AG04450 (cell line): ENCODE measurements at regions of chr7 and their contacts with region 1.

Region 1: DNA sequence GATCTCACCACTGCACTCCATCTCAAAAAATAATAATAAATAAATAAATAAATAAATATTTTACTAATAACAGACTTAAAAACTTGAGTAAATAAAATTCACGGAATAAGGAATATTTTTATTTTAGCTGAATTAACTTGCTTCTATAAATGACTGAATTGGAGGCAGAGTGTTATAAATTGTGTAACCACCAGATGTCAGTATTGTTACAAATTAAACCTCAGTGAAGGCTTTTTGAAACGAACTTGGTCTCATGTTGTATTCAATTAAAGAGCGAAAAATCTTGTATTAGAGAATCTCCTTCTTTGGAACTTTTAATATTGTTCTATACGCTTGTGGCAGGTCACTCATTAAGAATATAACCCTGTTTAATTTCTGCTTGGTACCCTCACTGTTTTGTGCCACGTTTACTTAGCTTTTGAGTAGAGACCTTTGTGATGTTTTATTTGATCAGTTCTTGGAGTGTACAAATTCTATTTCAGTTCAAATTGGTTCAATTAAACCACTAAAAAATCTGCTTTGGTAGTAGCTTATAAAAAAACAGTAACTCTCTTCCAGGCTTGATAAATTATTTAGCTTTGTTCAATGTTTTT is 45.6 kb upstream of the SCIN start:
- DNase-seq: peak; percentile 37
- H3K4me3 ChIP-seq: no peak overlapping the region
- H3K27ac ChIP-seq: no peak overlapping the region
- H3K27me3 ChIP-seq: no peaks in the 10 kb centered on the region
- CTCF ChIP-seq: peak; percentile 57

Region 2: GRCh38 chr7:12257582-12257981 is 267.3 kb before region 1 on chr7:
- CTCF ChIA-PET with region 1: no interaction called
- POLR2A ChIA-PET with region 1: no interaction called
- DNase-seq: no peak
- H3K4me3 ChIP-seq: no peak overlapping the region
- H3K27ac ChIP-seq: no peak overlapping the region
- H3K27me3 ChIP-seq: no peaks in the 10 kb centered on the region
- CTCF ChIP-seq: no peak

Region 3: DNA sequence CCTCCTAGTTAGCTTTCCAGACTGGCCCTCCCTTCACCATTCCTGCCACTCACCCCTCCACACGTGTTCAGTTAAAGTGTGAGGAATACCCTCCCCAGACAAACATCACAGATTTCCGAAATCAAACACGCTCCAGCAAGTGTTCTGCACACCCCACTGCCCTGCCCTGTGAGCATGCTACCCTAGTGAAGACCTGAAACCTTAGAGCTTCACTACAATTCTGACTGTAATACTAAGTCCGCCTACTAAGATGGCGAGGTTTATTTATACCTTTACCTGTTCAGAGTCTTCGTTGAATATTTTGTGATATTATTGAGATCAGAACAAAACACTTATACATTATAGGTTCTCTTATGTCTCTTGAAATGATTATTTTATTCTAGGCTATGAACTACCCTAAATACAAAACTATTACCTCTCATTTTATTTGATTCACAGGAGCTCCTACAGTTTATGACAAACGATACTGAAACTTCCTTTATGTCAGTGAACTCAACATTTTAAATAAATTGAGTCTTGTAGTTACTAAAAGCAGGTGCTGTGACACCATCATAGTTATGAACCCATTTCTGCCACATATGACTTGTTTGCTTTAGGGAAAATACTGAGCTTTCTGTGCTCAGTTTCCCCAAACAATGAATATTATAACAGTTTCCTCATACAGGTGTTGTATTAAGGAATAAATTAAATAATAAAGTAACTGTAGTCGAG is 54.2 kb after region 1 on chr7:
- CTCF ChIA-PET with region 1: interaction called, 10 read pairs
- POLR2A ChIA-PET with region 1: no interaction called
- DNase-seq: no peak
- H3K4me3 ChIP-seq: no peak overlapping the region
- H3K27ac ChIP-seq: no peak overlapping the region
- H3K27me3 ChIP-seq: no peaks in the 10 kb centered on the region
- CTCF ChIP-seq: no peak

Region 4: DNA sequence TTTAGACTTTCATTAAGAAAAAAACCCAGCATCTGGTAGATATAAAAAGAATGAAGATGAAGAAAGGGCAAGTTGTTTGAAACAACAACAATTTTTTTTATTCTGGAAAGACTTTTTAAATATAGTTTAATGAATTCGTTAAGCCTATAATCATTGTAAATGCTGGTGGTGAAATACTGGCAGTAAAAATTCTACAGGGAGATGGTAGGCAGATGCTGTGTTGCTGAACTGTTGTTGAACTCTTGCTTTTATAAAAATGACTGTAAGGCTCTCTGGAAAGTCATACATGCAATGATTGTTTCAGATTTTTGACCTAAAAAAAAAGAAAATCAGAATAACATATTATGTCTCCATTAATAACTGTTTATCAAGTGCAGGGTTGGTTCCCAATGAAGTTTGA is 84.7 kb after region 1 on chr7:
- CTCF ChIA-PET with region 1: interaction called, 19 read pairs
- POLR2A ChIA-PET with region 1: no interaction called
- DNase-seq: no peak
- H3K4me3 ChIP-seq: no peak overlapping the region
- H3K27ac ChIP-seq: no peak overlapping the region
- H3K27me3 ChIP-seq: no peaks in the 10 kb centered on the region
- CTCF ChIP-seq: no peak

Region 5: GRCh38 chr7:12623897-12624498 is 99.1 kb after region 1 on chr7:
- CTCF ChIA-PET with region 1: interaction called, 161 read pairs
- POLR2A ChIA-PET with region 1: no interaction called
- DNase-seq: no peak
- H3K4me3 ChIP-seq: no peak overlapping the region
- H3K27ac ChIP-seq: no peak overlapping the region
- H3K27me3 ChIP-seq: no peaks in the 10 kb centered on the region
- CTCF ChIP-seq: peak; percentile 88

Region 6: GRCh38 chr7:12630513-12630819 is 105.6 kb after region 1 on chr7:
- CTCF ChIA-PET with region 1: interaction called, 18 read pairs
- POLR2A ChIA-PET with region 1: no interaction called
- DNase-seq: no peak
- H3K4me3 ChIP-seq: no peak overlapping the region
- H3K27ac ChIP-seq: no peak overlapping the region
- H3K27me3 ChIP-seq: no peaks in the 10 kb centered on the region
- CTCF ChIP-seq: no peak

Region 7: DNA sequence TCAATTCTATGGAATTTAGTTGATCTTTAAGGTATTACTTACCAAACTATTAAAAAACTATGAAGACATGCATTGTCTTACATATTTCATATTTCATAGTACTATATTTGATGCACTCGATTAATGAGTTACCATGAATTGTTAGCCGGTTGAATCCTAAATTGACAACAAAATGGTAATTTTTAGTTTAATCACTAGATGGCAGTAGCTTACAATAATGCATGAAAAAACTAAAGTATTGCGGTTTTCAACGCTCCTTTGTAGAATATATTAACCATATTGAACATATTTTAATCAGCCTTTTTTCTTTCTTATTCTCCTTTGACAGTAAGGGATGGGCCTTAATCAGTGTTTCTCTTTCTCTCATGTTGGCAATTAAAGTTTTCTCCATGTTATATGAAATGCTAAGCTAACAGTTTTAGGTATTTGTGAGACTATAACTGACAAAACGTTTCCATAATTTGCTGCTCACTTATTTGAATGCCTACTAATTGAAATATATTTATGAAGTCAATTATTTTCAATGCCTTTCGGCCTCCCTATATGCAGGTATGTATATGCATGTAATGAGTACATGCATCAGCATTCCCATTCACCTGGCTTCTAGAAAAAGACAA is 114.1 kb after region 1 on chr7:
- CTCF ChIA-PET with region 1: interaction called, 16 read pairs
- POLR2A ChIA-PET with region 1: no interaction called
- DNase-seq: no peak
- H3K4me3 ChIP-seq: no peak overlapping the region
- H3K27ac ChIP-seq: no peak overlapping the region
- H3K27me3 ChIP-seq: no peaks in the 10 kb centered on the region
- CTCF ChIP-seq: peak; percentile 62

Region 8: DNA sequence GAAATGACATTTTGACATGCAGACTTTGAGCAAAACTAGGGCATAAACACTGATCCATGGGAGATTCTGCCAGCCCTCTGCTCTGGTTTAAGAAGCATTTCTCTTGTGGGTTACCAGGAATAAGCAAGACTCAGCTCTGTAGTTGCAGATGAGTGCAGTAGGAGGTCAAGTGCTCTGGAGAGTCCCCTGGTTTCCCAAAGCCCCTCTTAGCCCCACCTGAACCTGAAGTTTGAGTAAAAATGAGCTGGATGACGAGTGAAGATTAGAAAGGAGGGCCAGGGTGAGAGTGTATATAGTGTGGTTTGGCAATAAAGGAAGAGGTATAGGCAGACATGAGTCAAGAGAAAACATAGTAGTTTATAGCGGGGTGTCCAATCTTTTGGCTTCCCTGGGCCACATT is 382.9 kb after region 1 on chr7:
- CTCF ChIA-PET with region 1: no interaction called
- POLR2A ChIA-PET with region 1: no interaction called
- DNase-seq: no peak
- H3K4me3 ChIP-seq: no peak overlapping the region
- H3K27ac ChIP-seq: no peak overlapping the region
- H3K27me3 ChIP-seq: no peaks in the 10 kb centered on the region
- CTCF ChIP-seq: no peak

Region 9: DNA sequence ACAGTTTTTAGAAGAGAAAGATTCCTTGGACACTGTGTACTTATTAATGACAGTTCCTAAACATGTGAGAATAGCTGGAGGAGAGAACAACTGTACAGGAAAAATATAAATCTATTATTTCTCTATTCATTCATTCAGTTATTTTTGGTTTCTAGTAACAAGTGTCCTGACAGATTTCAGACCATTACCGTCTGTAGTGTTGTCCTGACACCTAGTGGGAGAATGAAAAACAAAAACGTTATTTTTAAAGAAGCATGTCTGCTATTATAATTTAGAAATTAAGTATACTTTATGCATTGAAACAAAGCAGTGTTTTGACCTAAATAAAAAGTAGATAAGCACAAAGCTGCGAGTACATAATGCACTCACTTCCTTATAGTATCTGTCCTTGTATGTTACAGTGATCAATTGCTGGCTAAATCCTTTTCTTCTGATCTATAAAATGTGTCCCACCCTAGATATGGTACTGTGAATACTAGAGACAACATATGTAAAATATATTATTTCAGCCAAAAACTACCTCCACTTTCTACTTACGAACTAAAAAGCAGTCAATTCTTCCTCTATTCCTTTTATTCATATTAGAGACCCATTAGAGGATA is 738.1 kb after region 1 on chr7:
- CTCF ChIA-PET with region 1: interaction called, 48 read pairs
- POLR2A ChIA-PET with region 1: no interaction called
- DNase-seq: peak; percentile 24
- H3K4me3 ChIP-seq: no peak overlapping the region
- H3K27ac ChIP-seq: no peak overlapping the region
- H3K27me3 ChIP-seq: no peaks in the 10 kb centered on the region
- CTCF ChIP-seq: peak; percentile 61